Naive thymus-derived CD4-positive, alpha-beta T cell (primary cell): ENCODE measurements at regions of chr11 and their contacts with region 1.

Region 1: DNA sequence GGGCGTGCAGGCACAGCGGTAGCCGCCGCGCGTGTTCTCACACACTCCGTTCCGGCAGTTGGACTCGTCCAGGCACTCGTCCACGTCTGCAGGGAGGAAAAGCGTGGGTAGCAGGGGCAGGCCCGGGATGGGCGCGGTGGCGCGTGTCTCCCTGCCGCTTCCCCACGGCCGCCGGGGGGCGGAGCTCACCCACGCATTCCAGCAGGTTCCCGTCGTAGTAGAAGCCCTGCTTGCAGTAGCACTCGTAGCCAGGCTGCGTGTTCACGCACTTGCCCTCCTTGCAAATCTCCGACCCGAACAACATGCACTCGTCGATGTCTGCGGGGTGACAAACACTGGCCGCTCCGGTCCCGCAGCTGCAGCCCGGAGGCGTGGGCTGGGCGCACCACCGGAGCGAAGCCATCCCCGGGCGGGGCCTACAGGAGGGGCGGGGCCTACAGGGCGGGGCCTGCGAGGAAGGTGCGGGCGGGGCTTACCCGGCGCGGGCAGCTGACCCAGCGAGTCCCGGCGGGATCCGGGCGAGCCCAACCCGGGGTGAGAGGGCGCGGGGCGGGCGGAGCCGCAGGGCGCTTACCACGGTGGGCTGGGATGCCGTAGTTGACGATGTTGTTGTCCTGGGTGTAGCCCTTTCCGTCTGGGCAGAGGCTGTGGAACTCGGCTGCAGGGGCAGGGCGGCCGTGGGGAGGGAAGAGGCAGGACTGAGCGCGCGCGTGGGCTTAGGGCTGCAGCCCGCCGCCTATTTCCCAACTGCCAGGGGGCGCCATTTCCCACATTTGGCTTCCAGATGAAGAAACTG is 15.6 kb downstream of the SCYL1 start:
- DNase-seq: peak; percentile 84 to 95 (median 91)
- ATAC-seq: peak; percentile 94
- H3K4me3 ChIP-seq: peak overlapping the region; percentile 71
- H3K4me3 Mint-ChIP-seq: peak overlapping the region; percentile 81 to 90 (median 84)
- H3K27ac ChIP-seq: peak overlapping the region; percentile 74
- H3K27ac Mint-ChIP-seq: peak overlapping the region in 8 of 9 donors; percentile 70 to 92 (median 86)
- H3K4me1 ChIP-seq: peaks cover 12 to 18% of the 10 kb centered on the region in 2 donors
- H3K4me1 Mint-ChIP-seq: peaks cover 13 to 32% (median 22%) of the 10 kb centered on the region in 7 donors
- H3K27me3 ChIP-seq: no peaks in the 10 kb centered on the region
- H3K27me3 Mint-ChIP-seq: no peaks in the 10 kb centered on the region

Region 2: DNA sequence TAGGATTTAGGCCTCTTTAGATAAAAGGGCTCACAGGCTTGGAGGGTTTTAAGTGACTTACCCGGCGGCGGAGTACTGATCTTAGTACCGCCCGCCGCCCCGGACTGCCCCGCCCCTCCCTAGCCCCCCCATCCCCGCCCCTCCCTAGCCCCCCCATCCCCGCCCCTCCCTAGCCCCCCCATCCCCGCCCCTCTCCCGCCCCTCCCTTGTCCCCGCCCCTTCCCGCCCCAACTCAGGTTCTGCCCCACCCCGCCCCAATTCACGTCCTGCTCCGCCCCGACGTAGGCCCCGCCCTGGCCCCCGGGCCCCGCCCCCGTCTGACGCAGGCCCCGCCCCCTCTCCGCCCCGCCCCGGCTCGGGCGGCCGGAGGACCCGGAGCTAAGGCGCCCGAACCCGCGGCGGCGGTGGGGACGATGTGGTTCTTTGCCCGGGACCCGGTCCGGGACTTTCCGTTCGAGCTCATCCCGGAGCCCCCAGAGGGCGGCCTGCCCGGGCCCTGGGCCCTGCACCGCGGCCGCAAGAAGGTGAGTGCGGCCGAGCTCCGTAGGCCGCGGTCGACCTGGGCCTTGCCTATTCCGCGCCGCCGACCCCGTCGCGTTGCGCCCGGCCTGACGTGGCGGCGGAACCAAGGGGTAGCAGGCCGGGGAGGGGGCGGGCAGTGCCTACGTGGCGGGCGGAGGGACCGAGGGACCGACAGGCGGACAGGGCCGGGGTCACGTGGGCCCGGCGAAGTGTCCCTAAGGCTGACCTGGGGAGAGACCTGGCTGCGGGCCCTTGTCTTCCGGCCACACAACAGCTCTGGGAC is 15.6 kb before region 1 on chr11 and contains the start of gene SCYL1:
- CTCF ChIA-PET with region 1: interaction called, 5 read pairs
- POLR2A ChIA-PET with region 1: interaction called, 48 read pairs
- intact Hi-C with region 1: loop called (anchors 1 kb)
- DNase-seq: peak; percentile 58 to 86 (median 77)
- ATAC-seq: peak; percentile 97
- H3K4me3 ChIP-seq: peak within 1 kb of the TSS; percentile 79
- H3K4me3 Mint-ChIP-seq: peak within 1 kb of the TSS; percentile 86 to 96 (median 90)
- H3K27ac ChIP-seq: peak within 1 kb of the TSS; percentile 96
- H3K27ac Mint-ChIP-seq: peak within 1 kb of the TSS; percentile 89 to 98 (median 95)
- H3K4me1 ChIP-seq: peaks cover 31 to 40% of the 10 kb centered on the region in 2 donors
- H3K4me1 Mint-ChIP-seq: peaks cover 32 to 66% (median 54%) of the 10 kb centered on the region in 7 donors
- H3K27me3 ChIP-seq: no peaks in the 10 kb centered on the region
- H3K27me3 Mint-ChIP-seq: no peaks in the 10 kb centered on the region
- total RNA-seq, gene SCYL1: 63.2 to 79.8 (median 70.4) TPM

Region 3: DNA sequence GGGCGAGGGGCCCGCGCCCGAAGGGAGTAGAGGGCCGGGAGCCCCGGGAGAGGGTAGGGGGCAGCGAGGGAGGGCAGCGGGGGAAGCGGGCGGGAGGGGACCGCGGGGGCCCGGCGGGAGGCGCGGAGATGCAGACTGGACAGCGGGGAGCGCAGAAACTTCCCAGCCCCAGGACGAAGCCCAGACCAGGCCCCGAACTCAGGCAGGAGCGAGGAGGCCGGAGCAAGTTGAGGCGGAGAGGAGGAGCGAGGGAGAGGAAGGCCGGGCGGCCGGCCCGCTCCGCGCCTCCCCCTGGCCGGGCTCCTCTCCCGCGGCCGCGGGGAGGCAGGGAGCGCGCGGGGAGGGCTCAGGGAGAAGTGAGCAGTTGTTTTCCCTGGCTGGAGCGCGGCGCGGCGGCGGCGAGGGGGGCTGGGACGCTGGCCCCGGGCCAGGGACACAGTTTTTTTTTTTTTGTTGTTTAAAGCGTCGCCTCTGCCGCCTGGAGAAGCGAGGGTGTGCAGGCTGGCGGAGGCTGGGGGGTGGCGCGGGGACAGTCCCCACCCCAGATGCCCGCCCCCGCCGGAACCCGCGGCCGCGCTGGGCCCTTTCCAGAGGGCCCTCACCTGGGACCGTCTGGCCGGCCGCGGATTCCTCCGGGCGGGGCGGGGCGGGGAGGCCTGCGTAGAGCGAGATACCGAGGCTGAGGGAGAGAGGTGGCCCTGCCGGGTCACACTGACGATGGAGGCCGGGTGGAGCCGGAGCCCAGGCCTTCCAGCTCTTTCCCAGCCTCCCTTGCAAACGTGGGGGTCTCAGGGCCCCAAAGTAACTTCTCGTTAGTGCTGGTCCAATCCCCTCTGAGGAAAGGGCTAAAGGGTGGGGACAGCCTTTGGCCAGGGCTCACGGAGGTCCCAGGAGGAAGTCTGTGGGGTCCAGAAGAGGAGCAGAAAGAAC is 17.8 kb after region 1 on chr11 and contains the start of gene LTBP3:
- CTCF ChIA-PET with region 1: interaction called, 32 read pairs
- POLR2A ChIA-PET with region 1: interaction called, 186 read pairs
- intact Hi-C with region 1: loop called (anchors 1 kb)
- DNase-seq: peak in 2 of 9 donors; percentile 57 to 58
- ATAC-seq: peak; percentile 43
- H3K4me3 ChIP-seq: peak within 1 kb of the TSS; percentile 53
- H3K4me3 Mint-ChIP-seq: peak within 1 kb of the TSS; percentile 89 to 98 (median 94)
- H3K27ac ChIP-seq: peak within 1 kb of the TSS; percentile 89
- H3K27ac Mint-ChIP-seq: peak within 1 kb of the TSS; percentile 84 to 97 (median 92)
- H3K4me1 ChIP-seq: peaks cover 20 to 58% of the 10 kb centered on the region in 2 donors
- H3K4me1 Mint-ChIP-seq: peaks cover 46 to 73% (median 59%) of the 10 kb centered on the region in 7 donors
- H3K27me3 ChIP-seq: no peaks in the 10 kb centered on the region
- H3K27me3 Mint-ChIP-seq: no peaks in the 10 kb centered on the region
- total RNA-seq, gene LTBP3: 91.4 to 288 (median 280) TPM

Region 4: GRCh38 chr11:65593518-65594298 is 53.2 kb after region 1 on chr11:
- CTCF ChIA-PET with region 1: interaction called, 126 read pairs
- POLR2A ChIA-PET with region 1: interaction called, 66 read pairs
- intact Hi-C with region 1: loop called (anchors 1 kb)
- DNase-seq: peak in 2 of 9 donors; percentile 35 to 42
- ATAC-seq: peak; percentile 67
- H3K4me3 ChIP-seq: no peak overlapping the region
- H3K4me3 Mint-ChIP-seq: peak overlapping the region in 1 of 10 donors; percentile 9
- H3K27ac ChIP-seq: no peak overlapping the region
- H3K27ac Mint-ChIP-seq: peak overlapping the region in 4 of 9 donors; percentile 25 to 69 (median 40)
- H3K4me1 ChIP-seq: peaks cover 9 to 15% of the 10 kb centered on the region in 2 donors
- H3K4me1 Mint-ChIP-seq: peaks cover 4 to 26% (median 23%) of the 10 kb centered on the region in 7 donors
- H3K27me3 ChIP-seq: no peaks in the 10 kb centered on the region
- H3K27me3 Mint-ChIP-seq: no peaks in the 10 kb centered on the region

Region 5: DNA sequence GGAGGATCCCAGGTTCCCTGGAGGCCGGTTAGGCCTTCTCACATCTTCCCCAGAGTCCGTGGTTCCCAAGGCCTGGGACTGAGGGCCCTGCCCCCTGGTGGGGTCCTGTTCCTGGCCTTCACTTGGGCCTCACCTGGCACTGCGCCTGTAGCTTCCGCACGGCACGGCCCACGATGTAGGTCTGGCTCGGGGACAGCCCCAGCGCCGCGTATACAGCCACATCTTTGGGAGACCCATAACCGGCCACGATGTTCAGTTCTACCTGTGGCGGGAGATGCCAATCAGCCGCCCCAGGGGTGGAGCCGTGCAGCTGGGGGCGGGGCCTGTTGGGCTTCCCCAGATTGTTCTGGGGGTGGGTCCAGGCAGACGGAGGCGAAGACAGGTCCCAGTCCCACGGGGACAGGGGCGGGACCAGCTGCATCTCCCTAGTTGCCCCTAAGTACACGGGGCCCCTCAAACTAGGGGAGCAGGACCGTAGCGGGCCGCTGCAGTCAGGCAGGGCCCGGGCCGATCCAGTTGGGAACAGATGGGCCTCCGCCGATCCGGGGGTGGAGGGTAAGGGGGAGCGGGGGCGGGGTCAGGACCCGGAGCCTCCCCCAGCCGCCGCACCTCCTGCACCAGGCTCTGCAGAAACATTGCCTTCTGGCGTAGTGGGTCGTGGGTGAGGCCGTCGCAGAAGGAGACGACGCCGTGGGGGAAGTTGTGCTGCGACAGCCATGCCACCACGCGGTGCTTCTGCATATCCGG is 1952.5 kb after region 1 on chr11:
- CTCF ChIA-PET with region 1: no interaction called
- POLR2A ChIA-PET with region 1: no interaction called
- intact Hi-C with region 1: no loop called
- DNase-seq: no peak
- ATAC-seq: peak; percentile 28
- H3K4me3 ChIP-seq: no peak overlapping the region
- H3K4me3 Mint-ChIP-seq: no peak overlapping the region
- H3K27ac ChIP-seq: no peak overlapping the region
- H3K27ac Mint-ChIP-seq: peak overlapping the region in 2 of 9 donors; percentile 3 to 69
- H3K4me1 ChIP-seq: peaks cover 3% of the 10 kb centered on the region in 2 donors
- H3K4me1 Mint-ChIP-seq: peaks cover 7 to 14% (median 11%) of the 10 kb centered on the region in 7 donors
- H3K27me3 ChIP-seq: no peaks in the 10 kb centered on the region
- H3K27me3 Mint-ChIP-seq: no peaks in the 10 kb centered on the region